Caco-2 (cell line): ENCODE measurements at regions of chr11 and their contacts with region 1.

Region 1: GRCh38 chr11:12200279-12201010 is 90.1 kb downstream of the MICAL2 start:
- DNase-seq: no peak
- H3K4me3 ChIP-seq: no peak overlapping the region
- H3K4me3 Mint-ChIP-seq: peak overlapping the region; percentile 56
- H3K27ac Mint-ChIP-seq: peak overlapping the region; percentile 92
- H3K4me1 ChIP-seq: peaks cover 63% of the 10 kb centered on the region
- H3K4me1 Mint-ChIP-seq: peaks cover 47% of the 10 kb centered on the region
- H3K27me3 ChIP-seq: no peaks in the 10 kb centered on the region
- H3K27me3 Mint-ChIP-seq: no peaks in the 10 kb centered on the region
- CTCF ChIP-seq: no peak

Region 2: DNA sequence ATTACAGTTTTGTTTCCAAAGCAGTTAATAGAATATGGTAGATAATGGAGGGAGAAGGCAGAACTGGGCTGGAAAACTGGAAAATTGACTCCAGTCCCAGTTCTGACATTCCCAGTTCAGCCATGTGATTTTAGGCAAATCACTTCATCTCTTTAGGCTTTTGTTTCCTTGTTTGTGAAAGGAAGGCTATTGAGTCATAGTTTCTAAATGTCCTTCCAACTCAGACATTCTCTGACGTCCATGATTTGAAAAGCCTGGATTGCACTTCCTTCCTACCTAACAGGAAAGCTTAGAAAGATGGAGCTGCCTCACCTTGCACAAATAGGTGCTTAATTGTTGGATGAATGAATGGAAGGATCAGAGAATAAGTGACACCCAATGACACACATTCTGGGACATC is 558.9 kb before region 1 on chr11:
- CTCF ChIA-PET with region 1: no interaction called
- POLR2A ChIA-PET with region 1: no interaction called
- intact Hi-C with region 1: no loop called
- DNase-seq: no peak
- H3K4me3 ChIP-seq: no peak overlapping the region
- H3K4me3 Mint-ChIP-seq: no peak overlapping the region
- H3K27ac Mint-ChIP-seq: no peak overlapping the region
- H3K4me1 ChIP-seq: no peaks in the 10 kb centered on the region
- H3K4me1 Mint-ChIP-seq: no peaks in the 10 kb centered on the region
- H3K27me3 ChIP-seq: no peaks in the 10 kb centered on the region
- H3K27me3 Mint-ChIP-seq: peaks cover 30% of the 10 kb centered on the region
- CTCF ChIP-seq: no peak

Region 3: DNA sequence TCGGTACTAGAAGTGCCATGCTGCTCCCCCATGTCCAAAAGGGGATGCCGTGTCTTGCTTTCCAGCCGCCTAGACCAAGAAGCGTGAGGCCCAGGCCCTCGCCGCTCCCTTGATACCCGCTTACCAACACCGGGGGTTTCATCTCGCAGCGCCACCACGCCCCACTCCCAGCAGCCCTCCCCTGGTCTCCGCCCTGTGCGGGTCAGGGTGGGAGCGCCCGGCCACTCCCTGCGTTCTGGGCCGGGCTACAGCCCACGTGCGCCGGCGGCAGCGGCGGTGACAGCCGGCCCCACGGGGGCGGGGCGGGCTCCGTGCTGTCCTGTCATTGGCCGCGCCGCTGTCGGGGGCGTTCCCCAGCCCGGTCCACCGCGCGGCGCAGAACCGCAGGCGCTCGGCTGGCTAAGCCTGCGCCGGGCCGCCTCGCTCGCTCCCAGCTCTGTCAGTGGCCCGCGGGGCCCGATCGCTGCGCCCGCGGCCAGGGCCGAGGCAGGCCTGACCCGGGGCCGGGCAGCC is 90.2 kb before region 1 on chr11 and contains the start of gene MICAL2:
- CTCF ChIA-PET with region 1: no interaction called
- POLR2A ChIA-PET with region 1: no interaction called
- intact Hi-C with region 1: loop called (anchors 1 kb)
- DNase-seq: peak; percentile 90 to 96
- H3K4me3 ChIP-seq: peak within 1 kb of the TSS; percentile 61
- H3K4me3 Mint-ChIP-seq: peak within 1 kb of the TSS; percentile 83
- H3K27ac Mint-ChIP-seq: peak within 1 kb of the TSS; percentile 83
- H3K4me1 ChIP-seq: peaks cover 39% of the 10 kb centered on the region
- H3K4me1 Mint-ChIP-seq: peaks cover 38% of the 10 kb centered on the region
- H3K27me3 ChIP-seq: no peaks in the 10 kb centered on the region
- H3K27me3 Mint-ChIP-seq: no peaks in the 10 kb centered on the region
- CTCF ChIP-seq: no peak
- total RNA-seq, gene MICAL2: 247 and 272 TPM in 2 replicates

Region 4: GRCh38 chr11:12174477-12175143 is 25.8 kb before region 1 on chr11:
- CTCF ChIA-PET with region 1: interaction called, 10 read pairs
- POLR2A ChIA-PET with region 1: interaction called, 9 read pairs
- intact Hi-C with region 1: loop called (anchors 1 kb)
- DNase-seq: no peak
- H3K4me3 ChIP-seq: no peak overlapping the region
- H3K4me3 Mint-ChIP-seq: no peak overlapping the region
- H3K27ac Mint-ChIP-seq: peak overlapping the region; percentile 94
- H3K4me1 ChIP-seq: peaks cover 73% of the 10 kb centered on the region
- H3K4me1 Mint-ChIP-seq: peaks cover 45% of the 10 kb centered on the region
- H3K27me3 ChIP-seq: no peaks in the 10 kb centered on the region
- H3K27me3 Mint-ChIP-seq: no peaks in the 10 kb centered on the region
- CTCF ChIP-seq: no peak

Region 5: DNA sequence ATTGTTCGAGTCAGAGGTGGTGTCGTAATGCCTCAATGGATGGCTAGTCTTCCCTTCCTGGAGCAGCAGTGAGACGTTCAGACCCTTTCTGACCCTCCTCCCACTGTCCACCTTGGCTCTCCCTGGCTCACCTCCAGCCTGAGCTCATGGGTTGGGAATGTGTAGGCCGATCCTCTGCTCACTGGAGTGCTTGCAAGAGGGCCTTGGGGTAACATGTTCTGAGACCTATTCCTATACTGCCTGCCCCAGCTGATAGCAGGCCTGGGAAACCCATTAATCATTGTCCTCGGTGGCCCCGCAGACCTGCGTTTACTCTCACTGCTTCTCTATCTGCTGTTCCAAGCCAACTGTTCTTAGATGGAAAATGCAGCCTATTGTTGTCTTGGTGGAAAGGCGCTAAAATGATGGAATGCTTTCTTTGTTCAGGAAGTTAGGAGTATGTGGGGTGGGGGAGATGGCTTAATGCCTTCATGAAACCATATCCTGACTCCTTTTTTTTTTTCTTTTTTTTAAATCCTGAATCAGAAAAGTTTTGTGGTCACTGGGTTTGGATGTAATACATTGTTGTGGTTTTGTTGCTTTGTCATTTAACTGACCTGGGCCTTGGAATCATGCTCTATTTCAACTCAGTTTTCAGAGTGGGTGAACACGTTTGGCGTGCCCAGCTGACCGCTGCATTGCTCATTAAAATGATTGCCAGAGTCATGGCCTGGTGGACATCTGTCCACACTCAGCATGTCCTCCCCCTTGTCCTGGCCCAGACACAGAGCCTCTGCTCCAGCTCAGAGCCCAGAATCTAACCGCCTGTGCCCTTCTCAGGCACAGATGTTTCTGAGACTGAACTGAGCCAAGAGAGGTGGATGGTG is 17.5 kb before region 1 on chr11:
- CTCF ChIA-PET with region 1: interaction called, 10 read pairs
- POLR2A ChIA-PET with region 1: interaction called, 9 read pairs
- intact Hi-C with region 1: loop called (anchors 1 kb)
- DNase-seq: peak; percentile 71 to 91
- H3K4me3 ChIP-seq: no peak overlapping the region
- H3K4me3 Mint-ChIP-seq: no peak overlapping the region
- H3K27ac Mint-ChIP-seq: peak overlapping the region; percentile 55
- H3K4me1 ChIP-seq: peaks cover 73% of the 10 kb centered on the region
- H3K4me1 Mint-ChIP-seq: peaks cover 45% of the 10 kb centered on the region
- H3K27me3 ChIP-seq: no peaks in the 10 kb centered on the region
- H3K27me3 Mint-ChIP-seq: no peaks in the 10 kb centered on the region
- CTCF ChIP-seq: no peak

Region 6: GRCh38 chr11:12215181-12215593 is 14.7 kb after region 1 on chr11:
- CTCF ChIA-PET with region 1: no interaction called
- POLR2A ChIA-PET with region 1: no interaction called
- intact Hi-C with region 1: loop called (anchors 1 kb)
- DNase-seq: peak; percentile 60 to 61
- H3K4me3 ChIP-seq: no peak overlapping the region
- H3K4me3 Mint-ChIP-seq: no peak overlapping the region
- H3K27ac Mint-ChIP-seq: peak overlapping the region; percentile 87
- H3K4me1 ChIP-seq: peaks cover 56% of the 10 kb centered on the region
- H3K4me1 Mint-ChIP-seq: peaks cover 53% of the 10 kb centered on the region
- H3K27me3 ChIP-seq: no peaks in the 10 kb centered on the region
- H3K27me3 Mint-ChIP-seq: no peaks in the 10 kb centered on the region
- CTCF ChIP-seq: no peak

Region 7: DNA sequence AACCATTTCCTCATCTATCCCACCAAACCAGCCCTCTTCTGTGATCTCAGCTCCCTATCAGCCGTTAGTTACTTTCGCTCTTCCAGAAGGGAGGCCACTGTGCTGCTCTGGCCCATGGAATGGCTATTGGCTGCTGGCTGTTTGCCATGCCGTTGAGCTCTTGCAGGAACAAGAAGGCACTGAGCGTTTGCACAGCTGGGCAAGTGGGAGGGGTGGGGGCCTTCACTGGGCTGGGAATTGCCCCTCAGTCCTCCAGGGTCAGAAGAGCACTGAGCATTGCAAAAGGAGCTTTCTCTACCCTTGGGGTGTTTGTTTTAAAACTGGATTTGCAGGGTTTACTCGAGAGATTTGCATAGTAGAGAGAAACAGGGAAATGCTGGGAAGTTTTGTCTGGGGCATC is 47.9 kb after region 1 on chr11:
- CTCF ChIA-PET with region 1: interaction called, 3 read pairs
- POLR2A ChIA-PET with region 1: no interaction called
- intact Hi-C with region 1: loop called (anchors 1 kb)
- DNase-seq: peak; percentile 97 to 99
- H3K4me3 ChIP-seq: no peak overlapping the region
- H3K4me3 Mint-ChIP-seq: peak overlapping the region; percentile 58
- H3K27ac Mint-ChIP-seq: peak overlapping the region; percentile 85
- H3K4me1 ChIP-seq: peaks cover 79% of the 10 kb centered on the region
- H3K4me1 Mint-ChIP-seq: peaks cover 43% of the 10 kb centered on the region
- H3K27me3 ChIP-seq: no peaks in the 10 kb centered on the region
- H3K27me3 Mint-ChIP-seq: no peaks in the 10 kb centered on the region
- CTCF ChIP-seq: no peak